ENCODE measurements at regions of chr9 and their contacts with region 1.

Region 1: GRCh38 chr9:78023003-78023741 is 8.4 kb downstream of the GNAQ start:
- DNase-seq: peak; percentile 40
- H3K4me3 ChIP-seq: peak overlapping the region; percentile 5
- H3K27ac ChIP-seq: peak overlapping the region; percentile 26
- H3K4me1 ChIP-seq: peaks cover 81% of the 10 kb centered on the region
- H3K27me3 ChIP-seq: no peaks in the 10 kb centered on the region
- CTCF ChIP-seq: no peak

Region 2: DNA sequence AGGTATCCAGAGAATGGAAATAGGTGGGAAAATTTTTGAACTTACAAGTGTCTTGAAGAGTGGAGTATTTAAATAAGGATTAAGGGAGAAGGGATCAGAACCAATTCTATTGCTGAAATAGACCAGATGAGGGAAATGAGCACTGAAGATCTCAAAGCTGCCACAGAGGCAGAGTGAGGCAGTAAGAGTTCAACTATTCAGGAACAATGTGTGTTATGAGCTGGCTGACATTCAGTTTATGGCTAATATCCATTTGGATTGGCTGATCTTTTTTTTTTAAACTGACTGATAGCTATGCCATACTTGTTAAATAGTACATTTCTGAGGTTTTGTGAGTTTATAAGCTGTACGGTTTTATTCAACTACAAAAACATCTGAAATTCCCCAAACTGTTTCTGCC is 279.8 kb before region 1 on chr9:
- CTCF ChIA-PET with region 1: no interaction called
- POLR2A ChIA-PET with region 1: no interaction called
- intact Hi-C with region 1: no loop called
- DNase-seq: no peak
- H3K4me3 ChIP-seq: no peak overlapping the region
- H3K27ac ChIP-seq: no peak overlapping the region
- H3K4me1 ChIP-seq: peaks cover 50% of the 10 kb centered on the region
- H3K27me3 ChIP-seq: no peaks in the 10 kb centered on the region
- CTCF ChIP-seq: no peak

Region 3: GRCh38 chr9:77896938-77897667 is 126.1 kb before region 1 on chr9:
- CTCF ChIA-PET with region 1: no interaction called
- POLR2A ChIA-PET with region 1: no interaction called
- intact Hi-C with region 1: loop called (anchors 10 kb)
- DNase-seq: peak; percentile 65
- H3K4me3 ChIP-seq: no peak overlapping the region
- H3K27ac ChIP-seq: no peak overlapping the region
- H3K4me1 ChIP-seq: peaks cover 25% of the 10 kb centered on the region
- H3K27me3 ChIP-seq: no peaks in the 10 kb centered on the region
- CTCF ChIP-seq: peak; percentile 59

Region 4: GRCh38 chr9:77965445-77966123 is 57.6 kb before region 1 on chr9:
- CTCF ChIA-PET with region 1: no interaction called
- POLR2A ChIA-PET with region 1: no interaction called
- intact Hi-C with region 1: no loop called
- DNase-seq: no peak
- H3K4me3 ChIP-seq: no peak overlapping the region
- H3K27ac ChIP-seq: no peak overlapping the region
- H3K4me1 ChIP-seq: peaks cover 30% of the 10 kb centered on the region
- H3K27me3 ChIP-seq: no peaks in the 10 kb centered on the region
- CTCF ChIP-seq: no peak

Measured in A673 (cell line).